Panc1 (cell line): ENCODE measurements at regions of chr1 and their contacts with region 1.

Region 1: GRCh38 chr1:109667452-109668122 is at the start of gene GSTM2:
- DNase-seq: no peak
- ATAC-seq: peak; percentile 98
- H3K4me3 ChIP-seq: peak within 1 kb of the TSS; percentile 18 to 39
- H3K27ac ChIP-seq: peak within 1 kb of the TSS; percentile 74
- H3K4me1 ChIP-seq: no peaks in the 10 kb centered on the region
- H3K27me3 ChIP-seq: no peaks in the 10 kb centered on the region
- CTCF ChIP-seq: no peak
- total RNA-seq, gene GSTM2: 10.2 TPM

Region 2: GRCh38 chr1:109509176-109510134 is 158.1 kb before region 1 on chr1 and contains the start of gene AMIGO1:
- CTCF ChIA-PET with region 1: no interaction called
- POLR2A ChIA-PET with region 1: no interaction called
- in situ Hi-C with region 1: no loop called
- intact Hi-C with region 1: no loop called
- DNase-seq: no peak
- ATAC-seq: peak; percentile 80
- H3K4me3 ChIP-seq: peak within 1 kb of the TSS; percentile 49 to 67
- H3K27ac ChIP-seq: no peak within 1 kb of the TSS
- H3K4me1 ChIP-seq: no peaks in the 10 kb centered on the region
- H3K27me3 ChIP-seq: no peaks in the 10 kb centered on the region
- CTCF ChIP-seq: no peak
- total RNA-seq, gene AMIGO1: 0.64 TPM

Region 3: DNA sequence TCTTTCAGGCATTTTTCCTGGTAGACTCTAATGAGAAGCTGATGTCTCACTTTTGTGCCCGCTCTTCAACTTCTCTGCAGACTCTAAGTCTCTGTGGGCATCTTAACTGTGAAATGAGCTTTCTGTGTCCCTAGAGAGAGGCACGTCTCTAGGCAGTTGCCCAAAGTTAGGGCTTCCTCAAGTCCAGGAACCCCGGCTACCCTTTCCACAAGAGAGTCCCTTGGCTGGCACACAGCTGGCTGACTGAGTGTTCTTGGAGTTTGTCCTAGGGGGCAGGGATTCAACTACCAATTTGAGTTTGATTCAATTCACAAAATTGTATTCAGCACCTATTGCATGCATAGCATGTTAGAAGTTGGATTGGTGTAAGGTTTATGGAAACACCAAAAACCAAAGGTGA is 126.5 kb before region 1 on chr1:
- CTCF ChIA-PET with region 1: no interaction called
- POLR2A ChIA-PET with region 1: no interaction called
- in situ Hi-C with region 1: no loop called
- intact Hi-C with region 1: no loop called
- DNase-seq: no peak
- ATAC-seq: no peak
- H3K4me3 ChIP-seq: no peak overlapping the region
- H3K27ac ChIP-seq: no peak overlapping the region
- H3K4me1 ChIP-seq: no peaks in the 10 kb centered on the region; the same call in 1 of the 2 replicates
- H3K27me3 ChIP-seq: no peaks in the 10 kb centered on the region
- CTCF ChIP-seq: no peak

Region 4: GRCh38 chr1:109687616-109688499 is 20.3 kb after region 1 on chr1 and contains the start of gene GSTM1:
- CTCF ChIA-PET with region 1: no interaction called
- POLR2A ChIA-PET with region 1: no interaction called
- in situ Hi-C with region 1: no loop called
- intact Hi-C with region 1: no loop called
- DNase-seq: no peak
- ATAC-seq: no peak
- H3K4me3 ChIP-seq: no peak within 1 kb of the TSS
- H3K27ac ChIP-seq: no peak within 1 kb of the TSS
- H3K4me1 ChIP-seq: no peaks in the 10 kb centered on the region
- H3K27me3 ChIP-seq: no peaks in the 10 kb centered on the region
- CTCF ChIP-seq: no peak
- total RNA-seq, gene GSTM1: not detected

Region 5: DNA sequence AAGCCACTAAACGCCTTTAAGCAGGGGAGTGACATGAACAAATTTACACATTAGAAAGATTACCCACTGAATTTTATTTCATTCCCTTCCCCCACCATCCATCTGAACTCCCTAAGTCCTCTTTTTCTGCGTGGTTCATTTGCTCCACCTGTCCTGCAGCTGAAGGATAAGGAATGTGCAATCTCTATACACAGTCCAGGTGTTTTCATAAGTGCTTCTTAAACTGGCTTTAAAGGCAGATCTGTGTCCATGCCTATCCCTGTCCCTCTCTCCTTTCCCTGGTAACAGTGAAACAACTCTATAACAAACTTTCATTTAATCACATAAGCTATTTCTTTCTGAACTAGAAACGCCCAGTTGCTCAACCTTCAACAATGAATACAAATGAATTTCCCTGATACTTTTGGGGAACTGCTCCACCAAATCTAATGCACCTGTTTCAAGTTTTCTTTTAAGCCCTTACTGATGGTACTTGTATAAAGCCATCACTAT is 64.8 kb after region 1 on chr1:
- CTCF ChIA-PET with region 1: no interaction called
- POLR2A ChIA-PET with region 1: interaction called, 12 read pairs
- in situ Hi-C with region 1: no loop called
- intact Hi-C with region 1: no loop called
- DNase-seq: no peak
- ATAC-seq: peak; percentile 46; the same call in 1 of the 2 replicates
- H3K4me3 ChIP-seq: no peak overlapping the region
- H3K27ac ChIP-seq: no peak overlapping the region
- H3K4me1 ChIP-seq: peaks cover 3% of the 10 kb centered on the region; the same call in 1 of the 2 replicates
- H3K27me3 ChIP-seq: no peaks in the 10 kb centered on the region
- CTCF ChIP-seq: no peak